ENCODE measurements at regions of chr11 and their contacts with region 1.

Region 1: GRCh38 chr11:128884703-128885338 is 6.3 kb upstream of the KCNJ5 start:
- DNase-seq: peak; percentile 76

Region 2: GRCh38 chr11:128928400-128928799 is 43.6 kb after region 1 on chr11:
- intact Hi-C with region 1: no loop called
- DNase-seq: no peak

Region 3: DNA sequence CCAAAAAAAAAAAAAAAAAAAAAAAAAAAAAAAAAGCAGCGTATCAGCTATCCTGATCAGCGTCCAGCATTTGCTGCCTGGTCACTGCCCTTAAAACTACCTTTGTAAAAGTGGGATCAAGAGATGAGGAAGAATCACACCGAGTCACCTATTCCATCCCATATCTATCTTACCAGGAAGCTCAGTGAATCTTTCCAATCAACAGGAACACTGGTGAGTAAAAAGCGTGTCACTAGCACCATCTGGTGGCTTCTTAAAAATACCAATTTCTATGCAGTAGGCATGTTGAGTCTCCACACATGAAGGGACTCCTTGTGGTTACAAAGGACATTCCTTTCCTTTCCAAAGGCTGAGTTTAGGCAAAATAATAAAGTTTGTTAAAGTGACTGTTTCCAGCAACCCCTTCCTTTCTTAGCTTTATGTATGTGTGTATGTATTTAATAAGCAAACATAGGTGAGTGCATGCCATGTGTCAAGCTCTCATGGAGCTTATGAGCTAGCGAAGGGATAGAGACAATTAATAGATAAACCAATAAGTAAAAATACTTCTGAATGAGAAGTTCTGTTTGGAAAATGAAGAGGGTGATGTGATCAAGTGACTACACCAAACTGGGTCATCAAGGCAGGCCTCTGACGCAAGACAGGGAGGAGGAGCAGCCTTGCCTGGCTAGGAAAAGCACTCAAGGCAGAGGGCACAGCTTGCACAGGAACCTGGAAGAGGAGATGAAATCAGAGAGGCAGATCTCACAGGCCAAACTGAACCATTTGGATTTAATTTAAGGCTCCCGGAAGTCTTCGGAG is 71.8 kb after region 1 on chr11:
- intact Hi-C with region 1: loop called (anchors 1 kb)
- DNase-seq: no peak

Measured in cardiac septum (tissue), 1 donor.